HEK293T (cell line): ENCODE measurements at regions of chrX and their contacts with region 1.

Region 1: DNA sequence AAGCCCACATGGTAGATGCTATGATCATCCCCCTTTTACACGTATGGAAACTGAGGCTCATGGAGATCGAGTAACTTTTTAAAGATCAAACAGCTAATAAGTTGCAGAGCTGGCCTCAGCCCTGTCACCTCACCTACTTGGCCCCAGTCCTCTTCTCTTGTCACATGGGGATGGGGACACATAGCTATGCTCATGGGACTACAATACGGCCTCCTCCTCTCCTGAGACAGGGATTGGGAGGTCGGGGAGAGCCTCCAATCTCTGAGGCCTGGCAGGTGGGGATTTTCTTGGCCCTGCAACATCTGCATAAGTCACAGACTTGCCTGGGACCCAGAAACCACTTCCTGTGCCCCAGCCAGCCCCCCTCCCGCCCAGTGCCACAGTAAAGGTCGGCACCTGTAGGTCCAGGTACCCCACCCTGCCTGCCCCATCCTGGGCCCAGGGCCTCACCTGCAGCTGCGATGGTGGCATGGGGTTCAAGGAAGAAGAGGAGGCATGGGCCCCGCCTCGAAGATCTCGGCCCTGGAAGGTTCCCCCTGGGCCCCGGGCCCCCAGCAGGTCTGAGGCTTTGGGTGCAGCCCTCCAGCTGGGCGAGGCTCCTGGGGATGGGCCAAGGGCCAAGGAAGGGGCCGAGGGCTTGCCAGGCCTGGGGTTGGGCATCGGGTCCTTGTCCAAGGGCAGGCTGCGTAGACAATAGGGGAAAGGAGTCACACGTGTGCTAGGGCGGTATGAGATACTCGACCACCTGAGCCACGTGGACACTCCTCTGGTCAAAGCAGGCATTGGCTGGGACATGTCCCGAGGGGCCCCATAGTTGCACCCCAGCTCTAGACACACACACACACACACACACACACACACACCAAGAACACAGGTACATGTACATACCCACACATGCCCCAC is 6.4 kb downstream of the FOXP3 start:
- DNase-seq: no peak

Region 2: DNA sequence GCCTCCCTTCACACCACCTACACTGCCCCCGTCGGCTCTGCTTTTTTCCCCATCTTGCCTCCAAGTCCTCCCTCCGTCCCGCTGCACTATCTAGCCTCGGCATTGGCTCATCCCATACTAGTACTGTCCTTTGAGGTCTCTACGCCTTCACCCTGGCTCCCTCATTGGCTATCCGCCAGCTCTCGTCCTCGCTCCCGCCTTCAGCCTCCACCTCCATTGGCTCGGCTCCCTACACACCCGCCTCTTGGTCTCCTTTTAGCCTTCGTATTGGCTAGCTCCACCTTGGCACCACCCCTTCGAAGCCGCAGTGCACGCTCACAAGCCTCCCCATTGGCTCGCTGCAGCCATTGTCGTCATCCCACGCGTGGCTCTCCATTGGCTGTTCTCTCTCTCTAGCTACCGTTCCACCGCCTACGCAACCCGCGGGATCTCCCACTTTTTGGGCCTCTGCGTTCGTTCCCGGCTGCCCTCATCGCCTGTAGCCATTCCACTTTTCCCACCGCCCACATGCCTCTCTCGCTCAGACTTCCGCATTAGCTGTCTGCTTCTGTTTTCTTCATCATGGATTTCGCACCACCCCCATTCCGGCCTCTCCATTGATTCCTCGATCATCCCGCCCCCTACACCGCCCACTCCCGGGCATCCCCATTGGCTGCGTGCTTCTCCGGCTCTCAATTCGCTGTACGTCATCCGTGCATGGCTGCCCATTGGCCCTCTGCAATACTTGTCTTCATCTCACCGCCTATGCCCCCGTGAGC is 11.1 kb after region 1 on chrX:
- CTCF ChIA-PET with region 1: no interaction called
- POLR2A ChIA-PET with region 1: interaction called, 42 read pairs
- DNase-seq: peak; percentile 87